Activated CD8-positive, alpha-beta T cell treated with anti-CD3 and anti-CD28 coated beads for 36 hours (primary cell): ENCODE measurements at regions of chr5 and their contacts with region 1.

Region 1: GRCh38 chr5:36241631-36242533 is at the start of gene NADK2:
- DNase-seq: peak; percentile 95
- ATAC-seq: peak; percentile 93
- H3K4me3 Mint-ChIP-seq: peak within 1 kb of the TSS; percentile 78
- H3K27ac Mint-ChIP-seq: peak within 1 kb of the TSS; percentile 98
- H3K4me1 Mint-ChIP-seq: peaks cover 39% of the 10 kb centered on the region
- H3K27me3 Mint-ChIP-seq: no peaks in the 10 kb centered on the region
- CTCF ChIP-seq: peak; percentile 48
- total RNA-seq, gene NADK2: 22.7 to 25.2 TPM

Region 2: GRCh38 chr5:36151434-36152323 is 90.2 kb before region 1 on chr5 and contains the starts of genes LMBRD2 and SKP2:
- CTCF ChIA-PET with region 1: interaction called, 8 read pairs
- POLR2A ChIA-PET with region 1: interaction called, 34 read pairs
- intact Hi-C with region 1: loop called (anchors 5 kb)
- DNase-seq: peak; percentile 99
- ATAC-seq: peak; percentile 98
- H3K4me3 Mint-ChIP-seq: peak within 1 kb of the TSS; percentile 99
- H3K27ac Mint-ChIP-seq: peak within 1 kb of the TSS; percentile 89
- H3K4me1 Mint-ChIP-seq: peaks cover 58% of the 10 kb centered on the region
- H3K27me3 Mint-ChIP-seq: no peaks in the 10 kb centered on the region
- CTCF ChIP-seq: no peak
- total RNA-seq, gene LMBRD2: 9.9 to 10.8 TPM
- total RNA-seq, gene SKP2: 55.8 to 60.2 TPM

Region 3: GRCh38 chr5:36230151-36230793 is 11.6 kb before region 1 on chr5:
- CTCF ChIA-PET with region 1: interaction called, 12 read pairs
- POLR2A ChIA-PET with region 1: no interaction called
- intact Hi-C with region 1: no loop called
- DNase-seq: no peak
- ATAC-seq: no peak
- H3K4me3 Mint-ChIP-seq: no peak overlapping the region
- H3K27ac Mint-ChIP-seq: no peak overlapping the region
- H3K4me1 Mint-ChIP-seq: no peaks in the 10 kb centered on the region
- H3K27me3 Mint-ChIP-seq: no peaks in the 10 kb centered on the region
- CTCF ChIP-seq: no peak

Region 4: DNA sequence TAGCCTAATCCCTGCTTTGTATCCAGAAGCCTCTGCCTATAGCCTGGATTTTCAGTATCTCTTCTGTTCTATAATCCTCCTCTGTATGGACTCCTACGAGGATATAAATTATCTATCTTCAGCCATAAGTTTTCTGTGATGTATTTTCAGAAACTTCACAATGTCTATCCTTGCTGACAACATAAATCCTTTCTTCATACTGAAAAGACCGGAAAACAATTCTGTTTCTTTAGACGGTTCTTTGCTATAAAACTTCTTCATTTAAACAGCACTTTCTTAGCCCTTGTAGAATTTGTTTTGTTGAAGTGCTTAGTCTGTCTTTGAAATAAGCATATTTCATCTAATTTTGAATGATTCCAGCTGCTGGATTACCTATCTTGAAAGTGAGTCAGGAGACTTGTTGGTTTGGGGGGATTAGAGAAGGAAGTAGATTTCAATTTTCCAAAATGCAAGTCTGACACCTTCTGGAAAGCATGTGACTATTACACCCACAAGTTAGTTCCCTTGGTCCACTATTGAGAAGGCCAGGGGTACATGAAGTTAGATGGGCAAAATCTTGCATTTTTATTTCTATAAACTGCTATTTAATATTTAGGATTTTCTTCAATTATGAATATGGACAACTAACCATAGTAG is 156.1 kb after region 1 on chr5:
- CTCF ChIA-PET with region 1: no interaction called
- POLR2A ChIA-PET with region 1: no interaction called
- intact Hi-C with region 1: no loop called
- DNase-seq: no peak
- ATAC-seq: no peak
- H3K4me3 Mint-ChIP-seq: no peak overlapping the region
- H3K27ac Mint-ChIP-seq: no peak overlapping the region
- H3K4me1 Mint-ChIP-seq: no peaks in the 10 kb centered on the region
- H3K27me3 Mint-ChIP-seq: no peaks in the 10 kb centered on the region
- CTCF ChIP-seq: no peak